Posterior vena cava (tissue), 2 donors: ENCODE measurements at regions of chr10 and their contacts with region 1.

Region 1: GRCh38 chr10:22534849-22535604 is 179.4 kb downstream of the PIP4K2A start:
- DNase-seq: no peak

Region 2: GRCh38 chr10:22369434-22370072 is 165.5 kb before region 1 on chr10:
- intact Hi-C with region 1: no loop called
- DNase-seq: no peak

Region 3: GRCh38 chr10:22481687-22482541 is 53.1 kb before region 1 on chr10:
- intact Hi-C with region 1: no loop called
- DNase-seq: no peak

Region 4: GRCh38 chr10:22518167-22518724 is 16.8 kb before region 1 on chr10:
- intact Hi-C with region 1: loop called in 1 of 2 experiments (anchors 1 kb)
- DNase-seq: no peak